Activated CD8-positive, alpha-beta T cell treated with anti-CD3 and anti-CD28 coated beads for 36 hours (primary cell): ENCODE measurements at regions of chr7 and their contacts with region 1.

Region 1: GRCh38 chr7:2720582-2721491 is 32.8 kb downstream of the AMZ1 start:
- DNase-seq: peak; percentile 98
- ATAC-seq: peak; percentile 78
- H3K4me3 Mint-ChIP-seq: peak overlapping the region; percentile 19
- H3K27ac Mint-ChIP-seq: peak overlapping the region; percentile 77
- H3K4me1 Mint-ChIP-seq: peaks cover 55% of the 10 kb centered on the region
- H3K27me3 Mint-ChIP-seq: peaks cover 11% of the 10 kb centered on the region
- CTCF ChIP-seq: no peak

Region 2: GRCh38 chr7:2698581-2699288 is 22.1 kb before region 1 on chr7:
- CTCF ChIA-PET with region 1: interaction called, 33 read pairs
- POLR2A ChIA-PET with region 1: interaction called, 4 read pairs
- intact Hi-C with region 1: no loop called
- DNase-seq: peak; percentile 94
- ATAC-seq: peak; percentile 94
- H3K4me3 Mint-ChIP-seq: no peak overlapping the region
- H3K27ac Mint-ChIP-seq: peak overlapping the region; percentile 54
- H3K4me1 Mint-ChIP-seq: peaks cover 23% of the 10 kb centered on the region
- H3K27me3 Mint-ChIP-seq: peaks cover 10% of the 10 kb centered on the region
- CTCF ChIP-seq: no peak

Region 3: GRCh38 chr7:2757904-2758672 is 37.3 kb after region 1 on chr7:
- CTCF ChIA-PET with region 1: interaction called, 15 read pairs
- POLR2A ChIA-PET with region 1: interaction called, 10 read pairs
- intact Hi-C with region 1: no loop called
- DNase-seq: peak; percentile 92
- ATAC-seq: peak; percentile 96
- H3K4me3 Mint-ChIP-seq: peak overlapping the region; percentile 67
- H3K27ac Mint-ChIP-seq: peak overlapping the region; percentile 98
- H3K4me1 Mint-ChIP-seq: peaks cover 43% of the 10 kb centered on the region
- H3K27me3 Mint-ChIP-seq: no peaks in the 10 kb centered on the region
- CTCF ChIP-seq: no peak